SK-N-SH (cell line): ENCODE measurements at regions of chr11 and their contacts with region 1.

Region 1: DNA sequence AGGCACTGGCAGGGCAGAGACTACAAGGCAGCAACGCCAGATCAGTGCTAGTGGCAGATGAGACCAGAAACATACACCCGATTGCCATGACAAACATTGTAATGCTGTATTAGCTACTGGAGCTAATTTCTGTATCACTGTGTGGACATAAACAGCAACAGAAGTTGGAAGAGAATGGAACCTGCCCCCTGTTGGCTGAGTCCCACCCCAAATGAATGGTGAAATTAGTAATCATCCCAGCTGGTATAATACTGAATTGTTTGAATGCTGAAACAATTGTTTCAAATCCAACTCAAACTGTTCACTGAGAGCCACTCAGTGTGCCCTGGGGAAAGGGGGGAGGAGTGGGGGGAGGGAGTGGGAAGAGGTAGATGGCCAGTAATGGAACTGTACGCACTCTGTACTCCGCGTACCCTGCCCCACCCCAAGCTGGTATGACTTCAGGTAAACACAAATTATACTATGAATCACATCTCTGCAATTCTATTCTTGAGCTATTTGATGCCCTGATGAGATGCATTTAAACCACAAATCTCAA is 11.2 kb upstream of the BIRC3 start:
- DNase-seq: peak; percentile 33
- H3K4me3 ChIP-seq: no peak overlapping the region
- H3K27ac ChIP-seq: 0 out of 4 replicates have a peak overlapping the region, but pooled peaks of 1 of the 2 experiments have one; percentile 17
- H3K4me1 ChIP-seq: peaks cover 10 to 16% of the 10 kb centered on the region in 2 experiments; a peak in 3 of 4 replicates
- H3K27me3 ChIP-seq: no peaks in the 10 kb centered on the region
- CTCF ChIP-seq: peak; percentile 36
- EP300 ChIP-seq: no peak
- RAD21 ChIP-seq: peak; percentile 13; the same call in 1 of the 2 replicates

Region 2: GRCh38 chr11:102293873-102294601 is 12.1 kb before region 1 on chr11:
- CTCF ChIA-PET with region 1: interaction called, 21 read pairs
- POLR2A ChIA-PET with region 1: no interaction called
- DNase-seq: no peak
- H3K4me3 ChIP-seq: peak overlapping the region in 1 of 2 experiments; percentile 13; a peak in 1 of 4 replicates
- H3K27ac ChIP-seq: no peak overlapping the region
- H3K4me1 ChIP-seq: peaks cover 10% of the 10 kb centered on the region in 2 experiments
- H3K27me3 ChIP-seq: no peaks in the 10 kb centered on the region
- CTCF ChIP-seq: peak; percentile 70
- EP300 ChIP-seq: no peak
- RAD21 ChIP-seq: peak; percentile 51

Region 3: GRCh38 chr11:102705626-102706025 is 399.5 kb after region 1 on chr11 and contains the start of gene MMP27:
- CTCF ChIA-PET with region 1: no interaction called
- POLR2A ChIA-PET with region 1: no interaction called
- DNase-seq: no peak
- H3K4me3 ChIP-seq: peak within 1 kb of the TSS in 1 of 2 experiments; percentile 30; a peak in 2 of 4 replicates
- H3K27ac ChIP-seq: no peak within 1 kb of the TSS
- H3K4me1 ChIP-seq: no peaks in the 10 kb centered on the region
- H3K27me3 ChIP-seq: no peaks in the 10 kb centered on the region; the same call in 1 of the 2 replicates
- CTCF ChIP-seq: no peak
- EP300 ChIP-seq: no peak
- RAD21 ChIP-seq: no peak
- polyA plus RNA-seq, gene MMP27: not detected in 2 replicates